PC-9 (cell line): ENCODE measurements at regions of chr9 and their contacts with region 1.

Region 1: GRCh38 chr9:133726401-133727276 is 11.5 kb downstream of the SARDH start:
- DNase-seq: peak; percentile 44 to 78
- H3K4me3 ChIP-seq: no peak overlapping the region
- H3K27ac ChIP-seq: no peak overlapping the region
- H3K4me1 ChIP-seq: no peaks in the 10 kb centered on the region
- H3K27me3 ChIP-seq: peaks cover 96% of the 10 kb centered on the region
- CTCF ChIP-seq: peak; percentile 66

Region 2: DNA sequence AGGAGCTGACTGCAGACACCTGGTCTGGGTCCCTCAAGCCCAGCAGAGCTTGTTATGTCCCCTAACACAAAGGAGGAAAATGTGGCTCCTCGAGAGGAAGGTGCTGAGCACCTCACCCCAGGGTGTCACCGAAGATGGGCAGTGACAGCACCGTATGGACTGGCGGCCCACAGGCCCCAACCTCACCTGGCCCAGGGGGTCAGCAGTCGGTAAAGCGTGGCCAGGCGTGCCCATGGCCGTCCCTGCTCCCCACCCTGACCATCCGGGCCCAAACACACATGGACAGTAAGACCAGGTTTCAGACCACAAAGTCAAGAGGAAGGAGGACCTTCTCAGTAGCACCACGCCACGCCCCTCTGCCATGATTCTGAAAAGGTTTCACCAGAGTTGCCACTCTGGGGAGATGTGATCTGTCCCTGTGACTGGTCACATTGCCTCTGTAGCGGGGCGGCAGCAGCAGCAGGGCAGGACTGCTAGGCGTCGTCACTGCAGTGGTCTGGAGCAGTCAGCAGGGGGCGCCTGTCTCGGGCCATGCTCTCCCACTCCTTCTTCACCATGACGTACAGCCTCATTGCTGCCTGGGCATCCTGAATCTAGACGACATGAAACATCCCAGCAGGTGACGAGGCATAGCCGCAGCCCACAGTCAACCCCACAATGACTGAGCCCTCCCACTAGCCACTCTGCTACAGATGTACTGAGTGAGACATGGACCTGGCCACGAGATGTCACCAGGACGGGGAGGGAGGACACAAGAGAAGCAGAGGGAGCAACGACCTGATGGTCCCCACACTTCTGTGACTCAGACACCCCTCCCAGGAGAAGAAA is 319.9 kb before region 1 on chr9:
- CTCF ChIA-PET with region 1: no interaction called
- POLR2A ChIA-PET with region 1: no interaction called
- intact Hi-C with region 1: loop called (anchors 1 kb)
- DNase-seq: peak; percentile 37 to 74
- H3K4me3 ChIP-seq: no peak overlapping the region
- H3K27ac ChIP-seq: no peak overlapping the region
- H3K4me1 ChIP-seq: no peaks in the 10 kb centered on the region
- H3K27me3 ChIP-seq: no peaks in the 10 kb centered on the region
- CTCF ChIP-seq: peak; percentile 89

Region 3: DNA sequence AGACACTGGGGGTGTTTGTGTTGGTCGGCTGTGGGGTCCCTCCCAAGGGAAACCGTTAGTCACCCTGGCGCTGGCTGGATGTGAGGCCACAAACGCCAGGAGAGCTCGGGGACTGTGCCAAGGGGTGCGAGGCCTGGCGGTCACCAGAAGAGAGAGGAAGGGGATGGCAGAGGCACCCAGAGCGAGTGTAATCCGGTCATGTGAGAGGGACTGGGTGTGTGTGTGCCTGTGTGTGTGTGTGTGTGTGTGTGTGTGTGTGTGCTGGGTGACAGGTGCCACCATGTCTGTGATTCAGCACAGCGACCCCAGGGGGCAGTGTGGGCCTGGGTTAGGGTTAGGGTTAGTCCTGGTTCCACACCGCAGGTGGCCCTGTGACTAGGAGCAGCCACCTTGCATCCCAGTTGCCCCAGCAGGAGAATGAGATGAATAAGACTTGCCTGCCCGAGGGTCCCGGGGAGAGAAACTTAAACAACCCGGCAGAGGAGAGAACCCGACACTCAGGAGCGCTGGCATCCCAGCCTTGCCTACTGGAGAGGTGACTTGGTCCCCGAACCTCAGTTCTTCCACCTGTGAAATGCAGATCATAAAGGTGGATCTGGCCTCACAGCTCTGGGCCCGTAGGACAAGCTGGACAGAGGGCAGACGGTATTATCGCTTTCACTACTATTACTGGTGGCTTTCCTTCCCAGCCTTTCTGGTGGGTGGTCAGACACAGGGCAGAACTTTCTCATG is 193.5 kb before region 1 on chr9:
- CTCF ChIA-PET with region 1: interaction called, 3 read pairs
- POLR2A ChIA-PET with region 1: no interaction called
- intact Hi-C with region 1: loop called (anchors 1 kb)
- DNase-seq: peak in 1 of 2 experiments; percentile 78
- H3K4me3 ChIP-seq: no peak overlapping the region
- H3K27ac ChIP-seq: no peak overlapping the region
- H3K4me1 ChIP-seq: no peaks in the 10 kb centered on the region
- H3K27me3 ChIP-seq: peaks cover 98% of the 10 kb centered on the region
- CTCF ChIP-seq: peak; percentile 68

Region 4: GRCh38 chr9:133664173-133665051 is 62.2 kb before region 1 on chr9:
- CTCF ChIA-PET with region 1: no interaction called
- POLR2A ChIA-PET with region 1: no interaction called
- intact Hi-C with region 1: no loop called
- DNase-seq: no peak
- H3K4me3 ChIP-seq: no peak overlapping the region
- H3K27ac ChIP-seq: no peak overlapping the region
- H3K4me1 ChIP-seq: no peaks in the 10 kb centered on the region
- H3K27me3 ChIP-seq: peaks cover 84% of the 10 kb centered on the region
- CTCF ChIP-seq: no peak

Region 5: DNA sequence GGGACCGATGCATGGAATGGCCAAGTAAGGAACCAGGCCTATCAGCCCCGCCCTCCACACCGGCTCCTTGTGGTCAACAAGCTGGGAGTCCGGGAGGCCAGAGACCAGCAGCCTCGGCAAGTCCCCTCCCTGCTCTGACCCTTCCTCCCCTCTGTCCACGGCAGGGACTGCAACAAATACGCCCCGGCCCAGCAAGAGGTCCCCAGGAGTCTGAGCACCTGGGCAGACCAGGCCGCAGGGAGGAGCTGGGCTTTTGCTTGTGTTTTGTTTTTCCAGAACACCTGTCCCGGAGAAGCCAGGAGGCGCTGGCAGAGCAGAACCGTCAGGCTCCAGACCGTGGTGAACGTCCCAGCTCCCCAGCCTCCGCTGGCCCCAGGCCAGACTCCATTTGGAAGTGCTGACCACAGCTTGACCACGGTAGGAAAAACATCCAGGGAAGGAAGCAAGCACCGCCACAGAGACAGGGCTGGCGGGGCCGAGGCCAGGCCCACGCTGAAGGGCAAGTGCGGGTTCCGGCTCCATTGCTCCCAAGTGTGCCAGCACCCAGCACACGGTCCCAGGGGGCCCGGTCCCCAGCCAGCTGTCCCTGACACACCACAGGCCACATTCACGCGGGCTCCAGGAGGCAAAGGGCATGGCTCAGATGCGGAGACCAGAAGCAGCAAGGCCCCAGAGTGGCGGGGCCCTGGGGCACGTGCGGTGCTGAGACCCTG is 208.8 kb after region 1 on chr9:
- CTCF ChIA-PET with region 1: no interaction called
- POLR2A ChIA-PET with region 1: no interaction called
- intact Hi-C with region 1: no loop called
- DNase-seq: no peak
- H3K4me3 ChIP-seq: no peak overlapping the region
- H3K27ac ChIP-seq: no peak overlapping the region
- H3K4me1 ChIP-seq: no peaks in the 10 kb centered on the region
- H3K27me3 ChIP-seq: no peaks in the 10 kb centered on the region
- CTCF ChIP-seq: no peak